Activated CD8-positive, alpha-beta memory T cell treated with anti-CD3 and anti-CD28 coated beads, Interleukin-2, amount 10 ng/mL, durations not matched to agents 7 days and 5 days (primary cell): ENCODE measurements at regions of chr3 and their contacts with region 1.

Region 1: DNA sequence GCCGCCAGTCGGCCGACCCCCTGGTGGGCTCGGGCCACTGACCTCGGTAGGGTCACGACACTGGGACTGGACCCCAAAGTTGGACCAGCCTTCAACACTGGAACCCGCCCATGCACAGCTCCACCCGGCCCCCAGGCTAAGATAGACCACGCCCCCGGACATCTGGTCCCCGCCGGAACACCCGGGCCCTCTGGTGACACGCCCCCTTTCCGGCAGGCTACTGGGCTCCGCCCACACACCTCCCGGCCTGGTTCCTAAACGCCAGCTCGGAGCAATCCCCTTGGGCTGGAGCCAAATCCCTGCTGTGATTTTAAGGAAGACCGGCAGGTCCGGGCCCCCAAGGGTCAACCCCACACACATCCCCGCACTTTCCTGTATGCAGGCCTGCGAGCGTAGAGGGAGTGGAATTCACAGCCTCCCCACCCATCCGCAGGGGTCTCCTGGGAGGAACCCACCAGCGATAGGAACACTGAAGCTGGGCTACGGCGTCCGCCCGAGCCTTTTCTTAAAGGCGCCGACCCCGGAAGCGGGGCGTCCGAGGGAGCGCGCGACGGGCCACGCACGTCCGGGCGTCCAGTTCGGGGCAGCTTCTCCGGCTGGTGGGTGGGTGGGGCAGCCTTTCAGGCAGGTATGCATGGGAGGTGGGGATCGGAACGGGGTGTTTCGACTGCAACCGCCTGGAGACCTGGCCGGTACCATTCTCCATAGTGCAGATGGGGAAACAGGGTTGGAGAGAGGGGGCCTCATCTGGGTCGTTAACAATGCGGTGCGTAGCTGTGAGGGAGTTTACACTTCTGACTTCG is at the start of gene HEMK1:
- DNase-seq: peak; percentile 98
- ATAC-seq: peak; percentile 54
- H3K4me3 Mint-ChIP-seq: peak within 1 kb of the TSS; percentile 89
- H3K27ac Mint-ChIP-seq: peak within 1 kb of the TSS; percentile 95
- H3K4me1 Mint-ChIP-seq: peaks cover 57% of the 10 kb centered on the region
- H3K27me3 Mint-ChIP-seq: peaks cover 2% of the 10 kb centered on the region
- total RNA-seq, gene HEMK1: 49.9 to 61.3 TPM

Region 2: GRCh38 chr3:50525987-50526386 is 43.2 kb before region 1 on chr3:
- CTCF ChIA-PET with region 1: no interaction called
- DNase-seq: peak; percentile 87
- ATAC-seq: peak; percentile 98
- H3K4me3 Mint-ChIP-seq: no peak overlapping the region
- H3K27ac Mint-ChIP-seq: no peak overlapping the region
- H3K4me1 Mint-ChIP-seq: peaks cover 7% of the 10 kb centered on the region
- H3K27me3 Mint-ChIP-seq: peaks cover 16% of the 10 kb centered on the region

Region 3: GRCh38 chr3:50587806-50588758 is 18.9 kb after region 1 on chr3:
- CTCF ChIA-PET with region 1: interaction called, 347 read pairs
- DNase-seq: peak; percentile 90
- ATAC-seq: peak; percentile 41
- H3K4me3 Mint-ChIP-seq: peak overlapping the region; percentile 48
- H3K27ac Mint-ChIP-seq: peak overlapping the region; percentile 98
- H3K4me1 Mint-ChIP-seq: peaks cover 80% of the 10 kb centered on the region
- H3K27me3 Mint-ChIP-seq: no peaks in the 10 kb centered on the region

Region 4: DNA sequence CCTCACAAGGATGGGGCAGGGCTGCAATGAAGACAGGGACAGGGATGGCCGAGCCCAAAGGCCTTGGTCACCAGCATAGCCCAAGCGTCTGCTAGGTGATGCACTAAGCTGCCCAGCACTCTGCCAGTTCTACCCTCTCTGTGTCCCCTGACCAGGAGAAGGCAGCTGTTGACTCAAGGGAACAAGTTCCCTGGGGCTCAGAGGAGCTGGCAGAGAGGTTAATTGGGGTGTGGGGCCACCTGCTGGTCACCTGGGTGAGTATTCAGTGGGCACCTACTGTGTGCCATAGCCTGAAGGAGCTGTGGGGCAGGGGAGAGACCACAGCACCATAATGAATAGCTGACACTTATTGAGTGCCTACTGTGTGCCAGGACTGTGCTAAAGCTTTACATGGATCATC is 83.6 kb after region 1 on chr3:
- CTCF ChIA-PET with region 1: interaction called, 43 read pairs
- DNase-seq: peak; percentile 73
- ATAC-seq: peak; percentile 71
- H3K4me3 Mint-ChIP-seq: no peak overlapping the region
- H3K27ac Mint-ChIP-seq: no peak overlapping the region
- H3K4me1 Mint-ChIP-seq: peaks cover 7% of the 10 kb centered on the region
- H3K27me3 Mint-ChIP-seq: no peaks in the 10 kb centered on the region

Region 5: DNA sequence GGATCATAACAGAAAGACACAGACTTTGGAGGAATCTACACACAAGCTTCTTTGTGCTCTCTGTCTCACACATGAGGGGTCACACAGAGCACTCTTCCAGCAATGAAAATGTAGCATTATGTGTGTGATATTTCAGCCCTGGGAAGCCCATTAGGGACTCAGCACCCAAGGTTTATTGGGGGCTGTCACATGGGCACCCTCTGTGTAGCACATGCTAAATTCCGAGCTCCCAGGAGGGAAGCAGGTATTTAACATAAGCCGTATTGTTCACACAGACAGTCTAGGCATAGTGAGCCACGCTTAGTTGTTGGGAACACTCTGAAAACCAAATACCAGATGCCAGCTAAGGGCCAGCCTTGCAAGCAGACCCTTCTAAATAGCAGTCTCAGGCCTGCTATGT is 554.4 kb after region 1 on chr3:
- CTCF ChIA-PET with region 1: no interaction called
- DNase-seq: no peak
- ATAC-seq: no peak
- H3K4me3 Mint-ChIP-seq: no peak overlapping the region
- H3K27ac Mint-ChIP-seq: no peak overlapping the region
- H3K4me1 Mint-ChIP-seq: no peaks in the 10 kb centered on the region
- H3K27me3 Mint-ChIP-seq: no peaks in the 10 kb centered on the region